Activated CD8-positive, alpha-beta T cell treated with anti-CD3 and anti-CD28 coated beads, Interleukin-2, amount 10 ng/mL, durations not matched to agents 7 days and 5 days (primary cell): ENCODE measurements at regions of chr12 and their contacts with region 1.

Region 1: GRCh38 chr12:44875954-44876553 is at the start of gene NELL2:
- DNase-seq: peak; percentile 77
- ATAC-seq: peak; percentile 80
- H3K4me3 Mint-ChIP-seq: peak within 1 kb of the TSS; percentile 100
- H3K27ac Mint-ChIP-seq: peak within 1 kb of the TSS; percentile 86
- H3K4me1 Mint-ChIP-seq: peaks cover 33% of the 10 kb centered on the region
- H3K27me3 Mint-ChIP-seq: peaks cover 2% of the 10 kb centered on the region
- total RNA-seq, gene NELL2: 43.8 to 47.4 TPM

Region 2: GRCh38 chr12:44774815-44775411 is 101.1 kb before region 1 on chr12:
- CTCF ChIA-PET with region 1: interaction called, 62 read pairs
- POLR2A ChIA-PET with region 1: interaction called, 5 read pairs
- DNase-seq: peak; percentile 72
- ATAC-seq: peak; percentile 57
- H3K4me3 Mint-ChIP-seq: no peak overlapping the region
- H3K27ac Mint-ChIP-seq: no peak overlapping the region
- H3K4me1 Mint-ChIP-seq: peaks cover 7% of the 10 kb centered on the region
- H3K27me3 Mint-ChIP-seq: no peaks in the 10 kb centered on the region

Region 3: GRCh38 chr12:44812062-44812461 is 64.0 kb before region 1 on chr12:
- CTCF ChIA-PET with region 1: interaction called, 142 read pairs
- POLR2A ChIA-PET with region 1: interaction called, 14 read pairs
- DNase-seq: peak; percentile 79
- ATAC-seq: peak; percentile 92
- H3K4me3 Mint-ChIP-seq: no peak overlapping the region
- H3K27ac Mint-ChIP-seq: no peak overlapping the region
- H3K4me1 Mint-ChIP-seq: peaks cover 42% of the 10 kb centered on the region
- H3K27me3 Mint-ChIP-seq: no peaks in the 10 kb centered on the region

Region 4: GRCh38 chr12:44827832-44828438 is 48.1 kb before region 1 on chr12:
- CTCF ChIA-PET with region 1: interaction called, 59 read pairs
- POLR2A ChIA-PET with region 1: interaction called, 5 read pairs
- DNase-seq: no peak
- ATAC-seq: peak; percentile 61
- H3K4me3 Mint-ChIP-seq: peak overlapping the region; percentile 64
- H3K27ac Mint-ChIP-seq: peak overlapping the region; percentile 87
- H3K4me1 Mint-ChIP-seq: peaks cover 67% of the 10 kb centered on the region
- H3K27me3 Mint-ChIP-seq: no peaks in the 10 kb centered on the region

Region 5: GRCh38 chr12:44847888-44848702 is 28.0 kb before region 1 on chr12:
- CTCF ChIA-PET with region 1: interaction called, 94 read pairs
- POLR2A ChIA-PET with region 1: interaction called, 42 read pairs
- DNase-seq: peak; percentile 86
- ATAC-seq: peak; percentile 90
- H3K4me3 Mint-ChIP-seq: peak overlapping the region; percentile 61
- H3K27ac Mint-ChIP-seq: peak overlapping the region; percentile 96
- H3K4me1 Mint-ChIP-seq: peaks cover 88% of the 10 kb centered on the region
- H3K27me3 Mint-ChIP-seq: no peaks in the 10 kb centered on the region

Region 6: DNA sequence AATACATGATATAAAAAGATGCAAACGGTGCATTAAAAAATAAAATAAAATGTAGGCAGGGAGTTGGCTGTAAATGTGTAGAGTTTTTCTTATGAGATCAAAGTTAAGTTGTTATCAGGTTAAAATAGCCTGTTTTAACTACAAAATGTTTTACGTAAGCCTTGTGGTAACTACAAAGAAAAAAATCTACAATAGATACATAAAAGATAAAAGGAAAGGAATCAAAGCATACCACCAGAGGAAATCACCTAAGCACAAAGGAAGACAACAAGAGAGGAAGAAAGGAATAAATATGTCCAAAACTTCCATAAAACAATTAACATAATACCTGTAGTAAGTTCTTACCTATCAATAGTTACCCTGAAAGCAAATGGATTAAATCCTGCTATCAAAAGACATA is 12.2 kb before region 1 on chr12:
- CTCF ChIA-PET with region 1: interaction called, 19 read pairs
- POLR2A ChIA-PET with region 1: interaction called, 4 read pairs
- DNase-seq: no peak
- ATAC-seq: peak; percentile 54
- H3K4me3 Mint-ChIP-seq: no peak overlapping the region
- H3K27ac Mint-ChIP-seq: peak overlapping the region; percentile 11
- H3K4me1 Mint-ChIP-seq: peaks cover 47% of the 10 kb centered on the region
- H3K27me3 Mint-ChIP-seq: no peaks in the 10 kb centered on the region